Ascending aorta (tissue), 2 donors: ENCODE measurements at regions of chr13 and their contacts with region 1.

Region 1: DNA sequence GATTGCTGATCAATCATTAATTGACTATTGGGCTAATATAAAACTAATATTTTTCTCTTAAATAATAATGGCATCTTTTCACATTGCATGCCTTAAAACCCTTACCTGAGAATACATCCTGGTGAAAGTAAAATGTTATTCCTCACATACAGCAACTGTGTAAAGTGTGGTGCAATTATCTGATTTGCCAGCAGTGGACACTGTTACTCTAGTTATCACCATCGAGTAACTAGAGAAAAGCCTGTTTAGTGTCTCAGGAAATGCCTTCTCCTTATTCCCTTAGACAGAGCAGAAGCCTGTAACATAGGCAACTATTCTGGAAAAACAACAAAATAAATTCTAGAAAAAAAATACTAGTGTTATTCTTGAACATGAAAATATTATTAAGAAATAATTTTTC is 459.8 kb downstream of the FGF14 start:
- DNase-seq: no peak
- H3K4me3 ChIP-seq: no peak overlapping the region
- H3K27ac ChIP-seq: no peak overlapping the region
- H3K4me1 ChIP-seq: peaks cover 0 to 2% of the 10 kb centered on the region in 2 donors
- H3K27me3 ChIP-seq: no peaks in the 10 kb centered on the region
- CTCF ChIP-seq: peak; percentile 52 to 82 (median 77)

Region 2: GRCh38 chr13:101144808-101145419 is 797.1 kb before region 1 on chr13:
- intact Hi-C with region 1: loop called (anchors 10 kb)
- DNase-seq: no peak
- H3K4me3 ChIP-seq: no peak overlapping the region
- H3K27ac ChIP-seq: no peak overlapping the region
- H3K4me1 ChIP-seq: no peaks in the 10 kb centered on the region
- H3K27me3 ChIP-seq: no peaks in the 10 kb centered on the region
- CTCF ChIP-seq: peak; percentile 49 to 74 (median 71)

Region 3: GRCh38 chr13:102141625-102142472 is 199.8 kb after region 1 on chr13:
- intact Hi-C with region 1: loop called (anchors 10 kb)
- DNase-seq: no peak
- H3K4me3 ChIP-seq: no peak overlapping the region
- H3K27ac ChIP-seq: no peak overlapping the region
- H3K4me1 ChIP-seq: no peaks in the 10 kb centered on the region
- H3K27me3 ChIP-seq: no peaks in the 10 kb centered on the region
- CTCF ChIP-seq: peak in 2 of 3 experiments; percentile 50 to 67

Region 4: GRCh38 chr13:102460801-102461200 is 518.8 kb after region 1 on chr13:
- intact Hi-C with region 1: loop called (anchors 2 kb)
- DNase-seq: no peak
- H3K4me3 ChIP-seq: no peak overlapping the region
- H3K27ac ChIP-seq: no peak overlapping the region
- H3K4me1 ChIP-seq: no peaks in the 10 kb centered on the region
- H3K27me3 ChIP-seq: no peaks in the 10 kb centered on the region
- CTCF ChIP-seq: no peak

Region 5: DNA sequence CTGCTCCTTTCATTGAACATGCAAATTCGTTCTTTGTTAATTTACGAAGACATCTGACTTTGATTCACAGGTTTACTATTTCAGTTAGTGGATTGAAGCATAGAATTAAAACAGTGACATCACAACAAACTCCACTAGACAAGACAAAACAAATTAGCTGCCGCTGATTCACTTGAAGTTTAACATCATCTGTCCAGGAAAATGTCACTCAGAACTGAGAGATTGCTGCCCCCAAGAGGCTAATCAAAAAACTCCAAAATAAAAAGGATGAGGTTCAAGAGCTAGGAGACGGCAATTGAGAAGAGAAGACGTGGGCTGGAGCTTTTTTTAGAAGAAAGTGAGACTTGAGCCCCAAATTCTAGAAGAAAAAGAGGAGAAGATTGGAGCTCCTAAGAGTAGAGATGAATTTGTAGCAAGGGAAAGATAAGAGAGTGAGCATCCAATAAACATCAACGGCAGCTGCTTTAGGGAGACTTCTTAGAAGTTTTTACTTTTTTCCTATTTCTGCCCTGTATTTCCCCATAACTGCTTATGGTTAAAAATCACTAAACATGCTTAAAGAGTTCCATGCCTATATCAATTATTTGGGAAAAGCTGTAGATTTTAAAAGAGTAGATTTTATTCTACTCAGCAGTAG is 614.0 kb after region 1 on chr13:
- intact Hi-C with region 1: loop called (anchors 1 kb)
- DNase-seq: no peak
- H3K4me3 ChIP-seq: no peak overlapping the region
- H3K27ac ChIP-seq: no peak overlapping the region
- H3K4me1 ChIP-seq: no peaks in the 10 kb centered on the region
- H3K27me3 ChIP-seq: no peaks in the 10 kb centered on the region
- CTCF ChIP-seq: peak; percentile 15 to 46 (median 24)